Activated CD8-positive, alpha-beta T cell treated with anti-CD3 and anti-CD28 coated beads for 36 hours (primary cell): ENCODE measurements at regions of chr6 and their contacts with region 1.

Region 1: GRCh38 chr6:33200219-33201146 is at the starts of genes RXRB and SLC39A7:
- DNase-seq: peak; percentile 100
- ATAC-seq: peak; percentile 66
- H3K4me3 Mint-ChIP-seq: peak within 1 kb of the TSS; percentile 98
- H3K27ac Mint-ChIP-seq: peak within 1 kb of the TSS; percentile 99
- H3K4me1 Mint-ChIP-seq: peaks cover 61% of the 10 kb centered on the region
- H3K27me3 Mint-ChIP-seq: no peaks in the 10 kb centered on the region
- CTCF ChIP-seq: no peak
- total RNA-seq, gene RXRB: 41.2 to 41.9 TPM
- total RNA-seq, gene SLC39A7: 43.1 to 43.3 TPM

Region 2: DNA sequence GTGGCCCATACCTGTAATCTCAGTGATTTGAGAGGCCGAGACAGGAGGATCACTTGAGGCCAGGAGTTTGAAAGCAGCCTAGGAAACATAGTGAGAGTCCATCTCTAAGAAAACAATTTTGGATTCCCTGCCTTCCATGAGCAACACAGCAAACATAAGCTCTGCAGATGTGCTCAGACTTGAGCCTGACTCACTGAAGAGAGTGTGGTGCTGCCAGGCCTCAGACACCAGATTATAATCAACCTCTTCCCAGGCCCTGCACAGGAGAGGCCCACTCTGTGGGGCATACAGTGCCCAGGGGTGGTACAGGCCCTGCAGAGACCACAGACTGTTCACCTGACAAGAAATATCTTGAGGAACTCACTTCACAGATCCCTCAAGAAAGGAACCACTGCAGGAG is 104.8 kb before region 1 on chr6:
- CTCF ChIA-PET with region 1: no interaction called
- POLR2A ChIA-PET with region 1: no interaction called
- intact Hi-C with region 1: no loop called
- DNase-seq: no peak
- ATAC-seq: no peak
- H3K4me3 Mint-ChIP-seq: no peak overlapping the region
- H3K27ac Mint-ChIP-seq: no peak overlapping the region
- H3K4me1 Mint-ChIP-seq: no peaks in the 10 kb centered on the region
- H3K27me3 Mint-ChIP-seq: peaks cover 9% of the 10 kb centered on the region
- CTCF ChIP-seq: no peak

Region 3: GRCh38 chr6:33161354-33162331 is 38.8 kb before region 1 on chr6:
- CTCF ChIA-PET with region 1: interaction called, 24 read pairs
- POLR2A ChIA-PET with region 1: interaction called, 3 read pairs
- intact Hi-C with region 1: loop called (anchors 5 kb)
- DNase-seq: peak; percentile 83
- ATAC-seq: peak; percentile 97
- H3K4me3 Mint-ChIP-seq: peak overlapping the region; percentile 72
- H3K27ac Mint-ChIP-seq: peak overlapping the region; percentile 78
- H3K4me1 Mint-ChIP-seq: peaks cover 12% of the 10 kb centered on the region
- H3K27me3 Mint-ChIP-seq: peaks cover 2% of the 10 kb centered on the region
- CTCF ChIP-seq: peak; percentile 96

Region 4: DNA sequence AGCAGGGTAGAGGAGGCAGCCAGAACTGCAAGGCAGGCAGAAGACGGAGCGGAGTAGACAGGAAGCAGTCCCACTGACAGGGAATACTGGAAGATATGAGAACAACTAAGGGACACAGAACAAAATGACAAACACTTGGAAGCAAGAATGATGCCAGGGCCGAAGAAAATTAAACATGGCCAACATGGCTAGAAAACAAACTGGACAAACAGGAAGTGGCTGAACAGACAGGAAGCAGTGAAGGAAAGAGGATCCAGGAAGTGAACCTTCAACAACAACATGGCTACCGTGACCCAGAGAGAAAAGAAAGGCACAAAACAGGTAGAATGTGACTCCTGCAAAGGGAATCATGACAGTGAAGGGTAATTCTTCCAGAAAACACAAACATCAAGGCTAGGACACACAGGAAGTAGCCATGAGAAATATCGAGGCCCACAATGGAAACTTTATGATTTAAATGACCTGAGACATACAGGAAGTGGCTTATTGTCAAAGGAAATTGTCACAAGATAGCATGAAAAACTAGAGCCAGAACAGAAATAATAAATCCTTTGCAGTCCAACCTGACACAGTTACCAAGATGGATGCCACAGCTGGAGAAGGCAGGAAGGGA is 17.3 kb before region 1 on chr6:
- CTCF ChIA-PET with region 1: interaction called, 18 read pairs
- POLR2A ChIA-PET with region 1: interaction called, 4 read pairs
- intact Hi-C with region 1: no loop called
- DNase-seq: no peak
- ATAC-seq: peak; percentile 54
- H3K4me3 Mint-ChIP-seq: peak overlapping the region; percentile 53
- H3K27ac Mint-ChIP-seq: peak overlapping the region; percentile 99
- H3K4me1 Mint-ChIP-seq: peaks cover 19% of the 10 kb centered on the region
- H3K27me3 Mint-ChIP-seq: peaks cover 2% of the 10 kb centered on the region
- CTCF ChIP-seq: no peak